H1 (cell line): ENCODE measurements at regions of chr6 and their contacts with region 1.

Region 1: GRCh38 chr6:82006027-82006738 is 241.4 kb downstream of the IBTK start:
- DNase-seq: peak in 1 of 2 experiments; percentile 46
- H3K4me3 ChIP-seq: no peak overlapping the region
- H3K27ac ChIP-seq: no peak overlapping the region
- H3K4me1 ChIP-seq: no peaks in the 10 kb centered on the region
- H3K27me3 ChIP-seq: no peaks in the 10 kb centered on the region
- CTCF ChIP-seq: peak; percentile 22 to 71 (median 60)
- EP300 ChIP-seq: no peak
- POLR2A ChIP-seq: no peak
- RAD21 ChIP-seq: peak; percentile 77 to 82

Region 2: GRCh38 chr6:82017288-82017687 is 11.1 kb after region 1 on chr6:
- CTCF ChIA-PET with region 1: interaction called, 25 read pairs
- POLR2A ChIA-PET with region 1: no interaction called
- DNase-seq: no peak
- H3K4me3 ChIP-seq: no peak overlapping the region
- H3K27ac ChIP-seq: no peak overlapping the region
- H3K4me1 ChIP-seq: peaks cover 0 to 4% (median 2%) of the 10 kb centered on the region in 4 experiments; a peak in 2 of 7 replicates
- H3K27me3 ChIP-seq: no peaks in the 10 kb centered on the region
- CTCF ChIP-seq: no peak
- EP300 ChIP-seq: no peak
- POLR2A ChIP-seq: no peak
- RAD21 ChIP-seq: no peak

Region 3: DNA sequence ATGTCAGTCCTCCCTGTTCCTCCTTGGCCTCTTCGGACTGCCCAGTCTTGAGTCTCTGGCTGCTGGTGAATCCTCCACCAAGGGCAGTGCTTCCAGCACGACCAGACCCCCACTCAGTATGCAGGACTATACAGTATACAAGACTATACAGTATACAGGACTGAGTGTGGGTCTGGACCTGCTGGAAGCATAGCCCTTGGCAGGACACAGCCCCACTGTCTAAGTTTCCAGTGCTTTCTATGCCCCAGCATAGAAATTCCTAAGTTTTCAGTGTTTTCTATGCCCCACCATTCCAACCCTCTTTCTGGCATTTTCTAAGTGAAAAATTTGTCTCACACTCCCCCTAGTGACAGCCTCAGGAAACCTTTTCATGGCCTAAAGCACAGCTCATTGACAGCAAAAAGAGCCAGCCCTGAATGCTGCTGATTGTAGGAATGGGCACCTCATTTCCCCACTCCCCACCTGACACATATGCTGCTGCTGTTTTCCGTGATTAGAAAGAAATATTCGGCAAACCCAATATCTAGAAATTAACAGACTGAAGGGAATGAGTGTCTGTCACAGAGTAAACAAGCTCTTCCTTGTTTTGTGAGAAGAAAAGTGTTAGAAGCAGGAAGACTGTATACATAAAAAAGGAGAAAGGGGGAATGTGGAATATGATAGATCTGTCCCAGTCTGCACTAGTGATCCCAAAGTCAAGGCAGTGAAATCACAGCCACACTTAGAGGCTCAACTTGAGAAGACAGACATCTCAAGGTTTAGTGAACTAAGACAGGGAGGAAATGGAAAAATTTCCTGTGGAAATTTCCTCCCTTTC is 34.4 kb after region 1 on chr6:
- CTCF ChIA-PET with region 1: interaction called, 14 read pairs
- POLR2A ChIA-PET with region 1: no interaction called
- DNase-seq: peak in 1 of 2 experiments; percentile 56
- H3K4me3 ChIP-seq: no peak overlapping the region
- H3K27ac ChIP-seq: no peak overlapping the region
- H3K4me1 ChIP-seq: no peaks in the 10 kb centered on the region
- H3K27me3 ChIP-seq: no peaks in the 10 kb centered on the region
- CTCF ChIP-seq: peak; percentile 19 to 77 (median 62)
- EP300 ChIP-seq: no peak
- POLR2A ChIP-seq: no peak
- RAD21 ChIP-seq: peak; percentile 74 to 77